ENCODE measurements at regions of chr2 and their contacts with region 1.

Region 1: DNA sequence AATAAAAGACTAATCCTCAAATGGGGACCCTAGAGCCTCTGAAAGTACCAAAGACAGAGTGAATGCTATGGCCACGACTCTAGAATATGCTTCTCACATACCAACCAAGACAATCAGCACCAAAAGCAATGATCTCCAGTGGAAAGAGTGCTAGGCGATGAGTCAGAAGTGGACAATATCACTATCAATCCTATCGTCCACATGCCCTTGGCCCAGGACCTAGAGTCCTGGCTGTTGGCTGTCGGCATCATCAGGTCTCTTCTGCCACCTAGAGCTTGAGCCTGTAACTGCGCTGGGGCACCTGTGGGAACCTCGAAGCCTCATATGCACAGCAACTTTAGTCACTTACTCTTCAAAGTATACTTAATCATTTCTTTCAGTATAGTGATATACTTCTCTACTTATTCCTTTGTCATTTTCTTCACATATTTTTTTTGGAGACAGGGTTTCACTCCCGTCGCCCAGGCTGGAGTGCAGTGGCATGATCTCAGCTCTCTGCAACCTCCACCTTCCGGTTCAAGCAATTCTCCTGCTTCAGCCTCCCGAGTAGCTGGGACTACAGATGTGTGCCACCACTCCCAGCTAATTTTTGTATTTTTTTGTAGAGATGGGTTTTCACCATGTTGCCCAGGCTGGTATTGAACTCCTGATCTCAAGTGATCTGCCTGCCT is 29.7 kb downstream of the NOL10 start:
- DNase-seq: peak in 9 of 10 donors; percentile 29 to 59 (median 53)
- H3K4me3 ChIP-seq: no peak overlapping the region
- H3K27ac ChIP-seq: no peak overlapping the region
- H3K27me3 ChIP-seq: no peaks in the 10 kb centered on the region
- CTCF ChIP-seq: peak in 54 of 56 donors; percentile 42 to 77 (median 64)

Region 2: GRCh38 chr2:10072656-10073480 is 587.2 kb before region 1 on chr2:
- intact Hi-C with region 1: loop called in 1 of 2 experiments (anchors 10 kb)
- DNase-seq: peak; percentile 51 to 90 (median 78)
- H3K4me3 ChIP-seq: peak overlapping the region in 9 of 59 donors; percentile 5 to 28 (median 12)
- H3K27ac ChIP-seq: peak overlapping the region in 13 of 59 donors; percentile 6 to 80 (median 50)
- H3K27me3 ChIP-seq: peaks cover 0 to 30% (median 0%) of the 10 kb centered on the region in 45 donors
- CTCF ChIP-seq: peak; percentile 73 to 91 (median 84)

Region 3: DNA sequence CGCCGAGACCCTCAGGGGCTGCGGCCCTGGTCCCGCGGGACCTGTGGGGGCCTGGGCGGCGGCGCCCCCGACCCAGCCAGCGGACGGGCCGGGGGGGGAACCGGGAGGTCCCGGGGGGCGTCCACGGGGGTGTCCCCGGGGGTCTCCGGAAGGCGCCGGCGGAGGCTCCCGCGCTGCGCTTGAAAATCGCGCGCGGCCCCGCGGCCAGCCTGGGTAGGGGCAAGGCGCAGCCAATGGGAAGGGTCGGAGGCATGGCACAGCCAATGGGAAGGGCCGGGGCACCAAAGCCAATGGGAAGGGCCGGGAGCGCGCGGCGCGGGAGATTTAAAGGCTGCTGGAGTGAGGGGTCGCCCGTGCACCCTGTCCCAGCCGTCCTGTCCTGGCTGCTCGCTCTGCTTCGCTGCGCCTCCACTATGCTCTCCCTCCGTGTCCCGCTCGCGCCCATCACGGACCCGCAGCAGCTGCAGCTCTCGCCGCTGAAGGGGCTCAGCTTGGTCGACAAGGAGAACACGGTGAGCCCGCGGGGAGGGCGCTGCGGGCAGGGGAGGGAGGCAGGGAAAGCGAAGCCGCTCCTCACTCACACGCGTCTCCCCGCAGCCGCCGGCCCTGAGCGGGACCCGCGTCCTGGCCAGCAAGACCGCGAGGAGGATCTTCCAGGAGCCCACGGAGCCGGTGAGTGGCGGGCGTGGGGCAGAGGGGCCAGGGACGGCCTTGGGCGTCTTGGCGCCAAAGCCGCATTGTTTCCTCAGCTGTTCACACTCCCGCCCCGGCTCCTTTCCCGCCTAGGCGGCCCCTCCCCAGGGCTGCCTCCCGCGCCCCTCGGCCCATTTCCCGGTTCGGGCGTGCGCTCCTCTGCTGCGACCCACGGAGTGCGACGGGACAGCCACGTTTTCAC is 537.4 kb before region 1 on chr2 and contains the start of gene RRM2:
- intact Hi-C with region 1: loop called in 1 of 2 experiments (anchors 10 kb)
- DNase-seq: peak; percentile 87 to 95 (median 92)
- H3K4me3 ChIP-seq: peak within 1 kb of the TSS; percentile 41 to 78 (median 61)
- H3K27ac ChIP-seq: no peak within 1 kb of the TSS
- H3K27me3 ChIP-seq: peaks cover 0 to 31% (median 18%) of the 10 kb centered on the region in 45 donors
- CTCF ChIP-seq: peak in 8 of 56 donors; percentile 3 to 23 (median 12)
- total RNA-seq, gene RRM2: 0.11 to 3.3 (median 0.83) TPM in 45 of 120 experiments, not detected in the others

Region 4: GRCh38 chr2:10434886-10435819 is 224.9 kb before region 1 on chr2:
- intact Hi-C with region 1: loop called (anchors 5 to 10 kb)
- DNase-seq: peak in 9 of 10 donors; percentile 55 to 85 (median 69)
- H3K4me3 ChIP-seq: no peak overlapping the region
- H3K27ac ChIP-seq: no peak overlapping the region
- H3K27me3 ChIP-seq: peaks cover 0 to 11% (median 0%) of the 10 kb centered on the region in 45 donors
- CTCF ChIP-seq: peak; percentile 66 to 99 (median 96)

Region 5: GRCh38 chr2:11527001-11527400 is 867.0 kb after region 1 on chr2:
- intact Hi-C with region 1: no loop called
- DNase-seq: no peak
- H3K4me3 ChIP-seq: no peak overlapping the region
- H3K27ac ChIP-seq: no peak overlapping the region
- H3K27me3 ChIP-seq: no peaks in the 10 kb centered on the region
- CTCF ChIP-seq: no peak

Measured in dorsolateral prefrontal cortex (tissue), 120 donors.